Activated T-helper 1 cell treated with anti-CD3 and anti-CD28 coated beads, Interleukin-12 subunit alpha, Interleukin-12 subunit beta, Interleukin-2, Interleukin-4 antibody, amounts not matched to agents 30 ng/mL and 10 ng/mL and 1 ng/mL, durations not matched to agents 14 hours and 24 hours and 36 hours (primary cell): ENCODE measurements at regions of chr11 and their contacts with region 1.

Region 1: DNA sequence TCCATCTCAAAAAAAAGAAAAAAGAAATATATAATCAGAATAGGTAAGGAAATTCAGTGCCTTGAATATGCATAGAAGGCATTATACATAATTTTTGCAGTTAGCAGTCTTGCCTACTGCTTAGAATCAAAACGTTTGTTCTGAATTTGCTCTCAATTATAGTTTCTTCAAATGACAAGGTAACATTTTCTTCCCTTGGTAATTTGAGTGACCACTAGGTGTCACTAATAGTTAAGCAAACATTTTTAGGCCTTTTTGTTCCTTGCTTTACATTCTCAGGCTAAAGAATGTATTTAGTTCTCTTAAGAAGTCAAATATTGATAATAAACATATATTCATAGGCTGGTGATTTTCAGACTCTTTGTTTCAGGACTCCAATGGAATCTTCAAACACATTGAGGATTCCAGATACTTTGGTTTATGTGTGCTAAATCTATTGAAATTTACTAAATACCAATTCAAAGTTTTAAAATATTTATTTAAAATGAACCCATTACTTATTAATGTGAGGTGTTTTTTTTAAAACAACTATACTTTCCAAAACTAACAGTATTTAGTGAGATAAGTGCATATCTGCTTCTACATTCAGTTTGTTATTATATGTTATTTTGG is 55.0 kb upstream of the DEPDC7 start:
- DNase-seq: no peak
- H3K4me3 Mint-ChIP-seq: no peak overlapping the region
- H3K27ac Mint-ChIP-seq: no peak overlapping the region
- H3K4me1 Mint-ChIP-seq: peaks cover 13% of the 10 kb centered on the region
- H3K27me3 Mint-ChIP-seq: no peaks in the 10 kb centered on the region

Region 2: GRCh38 chr11:32809313-32809712 is 151.3 kb before region 1 on chr11:
- intact Hi-C with region 1: loop called (anchors 5 kb)
- DNase-seq: peak; percentile 12
- H3K4me3 Mint-ChIP-seq: no peak overlapping the region
- H3K27ac Mint-ChIP-seq: no peak overlapping the region
- H3K4me1 Mint-ChIP-seq: no peaks in the 10 kb centered on the region
- H3K27me3 Mint-ChIP-seq: peaks cover 10% of the 10 kb centered on the region

Region 3: DNA sequence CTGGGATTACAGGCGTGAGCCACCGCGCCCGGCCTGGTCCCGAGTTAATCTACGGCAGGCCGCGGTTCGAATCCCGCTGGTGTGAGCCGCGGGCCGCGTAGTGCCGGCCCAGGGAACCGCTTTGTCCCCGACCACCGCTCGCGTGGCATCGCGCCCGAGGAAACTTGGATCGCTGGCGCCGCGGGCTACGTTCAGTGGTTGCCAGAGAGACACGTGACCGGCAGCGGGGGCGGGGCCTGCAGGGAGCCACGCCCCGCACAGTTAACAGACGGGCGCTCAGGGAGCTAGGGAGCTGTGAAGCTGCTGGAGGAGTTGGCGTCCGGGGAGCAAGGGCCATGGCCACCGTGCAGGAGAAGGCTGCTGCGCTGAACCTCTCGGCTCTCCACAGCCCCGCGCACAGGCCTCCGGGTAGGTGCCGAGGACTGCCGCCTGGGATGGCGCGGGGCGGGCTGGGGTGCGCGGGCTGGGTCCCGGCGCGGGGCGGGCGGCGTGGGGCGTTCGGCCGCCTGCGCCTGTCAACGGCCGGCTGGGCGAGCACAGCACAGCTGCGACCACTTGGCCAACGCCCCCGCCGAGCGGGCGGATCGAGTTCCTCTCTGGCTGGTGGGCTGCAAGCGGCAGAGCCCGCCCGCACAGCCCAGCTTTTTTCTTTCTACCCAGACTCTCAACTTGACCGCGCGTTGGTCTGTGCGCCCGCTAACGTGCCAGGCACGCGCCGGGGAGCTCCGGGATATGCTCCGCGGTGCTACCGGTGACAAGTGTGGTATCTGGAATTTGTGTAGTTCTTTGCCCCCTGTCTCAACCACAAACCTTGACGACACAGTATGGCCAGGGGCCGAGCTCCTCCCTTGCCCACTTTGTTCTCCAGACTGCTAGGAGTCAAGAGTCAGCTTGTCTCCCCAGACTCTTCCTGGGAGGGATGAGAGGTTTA is 55.2 kb after region 1 on chr11 and contains the start of gene DEPDC7:
- intact Hi-C with region 1: loop called (anchors 1 kb)
- DNase-seq: peak; percentile 66
- H3K4me3 Mint-ChIP-seq: peak within 1 kb of the TSS; percentile 79
- H3K27ac Mint-ChIP-seq: no peak within 1 kb of the TSS
- H3K4me1 Mint-ChIP-seq: peaks cover 18% of the 10 kb centered on the region
- H3K27me3 Mint-ChIP-seq: peaks cover 41% of the 10 kb centered on the region
- total RNA-seq, gene DEPDC7: 0.26 and 0.61 TPM in 2 replicates

Region 4: DNA sequence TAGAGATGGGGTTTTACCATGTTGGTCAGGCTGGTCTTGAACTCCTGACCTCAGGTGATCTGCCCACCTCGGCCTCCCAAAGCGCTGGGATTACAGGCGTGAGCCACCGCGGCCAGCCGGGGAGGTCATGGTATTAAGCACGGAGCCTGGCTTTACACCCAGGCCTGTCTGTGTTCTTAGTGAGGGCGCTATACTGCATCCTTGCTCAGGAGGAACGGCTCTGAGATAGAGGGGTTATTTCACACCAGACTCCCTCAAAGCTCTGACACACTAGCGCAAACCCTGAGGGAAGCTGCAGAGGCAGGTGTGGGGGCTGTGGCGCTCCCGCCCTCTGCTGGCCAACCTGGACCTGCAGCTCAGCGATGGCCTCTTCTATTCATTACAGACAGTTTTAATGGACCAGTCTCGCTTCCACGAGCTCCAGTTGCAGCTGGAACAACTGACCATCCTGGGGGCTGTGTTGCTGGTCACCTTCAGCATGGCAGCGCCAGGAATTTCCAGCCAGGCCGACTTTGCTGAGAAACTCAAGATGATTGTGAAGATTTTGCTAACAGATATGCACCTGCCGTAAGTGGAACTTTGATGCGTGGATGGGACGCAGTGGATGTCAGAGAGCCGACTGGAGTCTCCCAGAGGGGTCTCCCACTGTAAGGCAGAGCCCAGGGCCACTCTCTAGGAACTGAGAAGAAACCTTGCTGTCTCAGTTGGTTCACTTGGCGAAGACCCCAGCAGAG is 105.0 kb after region 1 on chr11:
- intact Hi-C with region 1: loop called (anchors 1 kb)
- DNase-seq: peak; percentile 47
- H3K4me3 Mint-ChIP-seq: no peak overlapping the region
- H3K27ac Mint-ChIP-seq: no peak overlapping the region
- H3K4me1 Mint-ChIP-seq: peaks cover 49% of the 10 kb centered on the region
- H3K27me3 Mint-ChIP-seq: no peaks in the 10 kb centered on the region

Region 5: DNA sequence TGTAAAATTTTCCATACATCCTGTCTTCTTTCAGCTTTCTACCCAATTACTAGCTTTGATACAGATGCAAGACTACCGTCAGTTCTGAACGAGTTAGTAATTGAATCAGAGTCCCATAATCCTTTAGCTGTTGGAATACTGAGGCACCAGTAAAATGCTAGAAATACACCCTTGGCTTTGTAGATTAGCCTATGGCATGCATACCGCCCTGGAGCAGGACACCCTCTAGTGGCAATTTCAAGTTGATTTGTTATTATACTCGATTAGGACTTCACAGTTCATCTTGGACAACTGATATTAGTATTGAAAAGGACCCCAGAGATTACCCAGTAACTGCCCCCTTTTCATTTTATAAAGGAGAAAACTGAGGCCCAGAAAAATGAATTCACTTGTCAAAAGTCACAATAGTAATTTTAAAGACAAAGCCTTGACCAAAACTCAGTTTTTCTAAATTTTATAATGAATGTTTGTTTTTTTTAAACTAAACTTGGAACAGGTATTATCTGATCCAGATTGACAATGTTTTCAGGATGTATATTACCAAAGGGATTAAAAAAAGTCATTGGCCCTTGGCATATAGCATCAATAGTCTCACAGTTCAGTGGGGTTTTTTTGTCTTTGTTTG is 369.2 kb after region 1 on chr11:
- intact Hi-C with region 1: loop called (anchors 1 kb)
- DNase-seq: no peak
- H3K4me3 Mint-ChIP-seq: no peak overlapping the region
- H3K27ac Mint-ChIP-seq: no peak overlapping the region
- H3K4me1 Mint-ChIP-seq: no peaks in the 10 kb centered on the region
- H3K27me3 Mint-ChIP-seq: no peaks in the 10 kb centered on the region